Ovary (tissue), 10 donors: ENCODE measurements at regions of chr16 and their contacts with region 1.

Region 1: GRCh38 chr16:22719945-22720344 is 94.0 kb upstream of the HS3ST2 start:
- DNase-seq: no peak
- H3K4me3 ChIP-seq: no peak overlapping the region
- H3K27ac ChIP-seq: no peak overlapping the region
- H3K4me1 ChIP-seq: no peaks in the 10 kb centered on the region
- H3K27me3 ChIP-seq: no peaks in the 10 kb centered on the region
- CTCF ChIP-seq: no peak
- EP300 ChIP-seq: no peak
- POLR2A ChIP-seq: no peak

Region 2: GRCh38 chr16:22770866-22771265 is 50.9 kb after region 1 on chr16:
- intact Hi-C with region 1: loop called in 1 of 4 experiments (anchors 5 kb)
- DNase-seq: no peak
- H3K4me3 ChIP-seq: no peak overlapping the region
- H3K27ac ChIP-seq: no peak overlapping the region
- H3K4me1 ChIP-seq: no peaks in the 10 kb centered on the region
- H3K27me3 ChIP-seq: no peaks in the 10 kb centered on the region
- CTCF ChIP-seq: no peak
- EP300 ChIP-seq: no peak
- POLR2A ChIP-seq: no peak

Region 3: DNA sequence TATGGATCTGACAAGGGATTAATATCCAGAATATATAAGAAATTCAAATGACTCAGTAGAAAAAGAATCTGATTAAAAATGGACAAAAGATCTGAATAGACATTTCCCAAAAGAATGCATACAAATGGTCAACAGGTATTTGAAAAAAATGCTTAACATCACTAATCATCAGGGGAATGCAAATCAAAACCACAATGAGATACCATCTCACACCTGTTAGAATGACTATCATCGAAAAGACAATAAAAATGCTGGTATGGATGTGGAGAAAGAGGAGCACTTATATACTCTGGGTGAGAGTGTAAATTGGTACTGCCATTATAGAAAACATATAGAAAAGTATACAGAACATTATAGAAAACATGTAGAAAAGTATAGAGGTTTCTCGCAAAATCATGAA is 77.6 kb after region 1 on chr16:
- intact Hi-C with region 1: no loop called
- DNase-seq: no peak
- H3K4me3 ChIP-seq: no peak overlapping the region
- H3K27ac ChIP-seq: no peak overlapping the region
- H3K4me1 ChIP-seq: no peaks in the 10 kb centered on the region
- H3K27me3 ChIP-seq: no peaks in the 10 kb centered on the region
- CTCF ChIP-seq: no peak
- EP300 ChIP-seq: no peak
- POLR2A ChIP-seq: no peak

Region 4: GRCh38 chr16:23131931-23132621 is 412.1 kb after region 1 on chr16:
- intact Hi-C with region 1: no loop called
- DNase-seq: no peak
- H3K4me3 ChIP-seq: peak overlapping the region; percentile 15
- H3K27ac ChIP-seq: no peak overlapping the region
- H3K4me1 ChIP-seq: peaks cover 9% of the 10 kb centered on the region
- H3K27me3 ChIP-seq: no peaks in the 10 kb centered on the region
- CTCF ChIP-seq: no peak
- EP300 ChIP-seq: no peak
- POLR2A ChIP-seq: no peak